Sigmoid colon (tissue), 7 donors: ENCODE measurements at regions of chr9 and their contacts with region 1.

Region 1: DNA sequence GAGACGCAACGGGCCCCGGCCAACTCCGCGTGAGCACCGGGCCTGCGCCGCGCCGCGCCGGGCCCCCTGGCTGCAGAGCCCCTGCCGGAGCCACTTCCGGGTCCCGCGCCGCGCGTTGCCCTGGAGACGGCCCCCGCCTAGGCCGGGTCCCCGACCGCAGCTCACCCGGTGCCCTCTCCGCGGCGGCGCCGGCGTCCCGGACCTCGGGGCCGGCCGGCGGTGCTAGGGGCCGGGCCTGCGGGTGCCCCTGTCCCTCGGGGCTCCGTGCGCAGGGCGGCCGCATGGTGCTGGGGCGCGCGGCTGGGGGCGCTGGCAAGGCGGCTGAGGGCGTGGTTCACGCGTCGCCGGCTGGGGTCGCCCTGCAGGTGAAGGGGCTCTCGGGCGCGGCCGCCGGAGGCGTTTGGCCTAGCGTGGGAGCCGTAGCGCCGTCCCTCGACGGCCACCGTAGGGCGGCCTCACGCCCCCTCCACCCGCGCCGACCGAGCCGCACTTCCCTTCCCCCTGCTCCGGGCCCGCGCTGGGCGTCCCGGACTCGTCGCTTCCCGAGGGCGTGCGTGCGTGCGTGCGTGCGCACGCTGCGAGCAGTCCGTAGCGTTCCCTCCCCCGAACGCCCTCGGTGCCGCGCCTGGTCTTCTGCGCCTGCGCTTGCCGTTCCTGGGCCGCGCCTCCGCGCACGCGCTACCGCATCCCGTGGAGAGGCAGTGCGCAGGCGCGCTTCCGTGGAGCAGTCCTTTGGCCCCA is at the start of gene TMEM250:
- DNase-seq: peak; percentile 98
- H3K4me3 ChIP-seq: peak within 1 kb of the TSS; percentile 54 to 98 (median 88)
- H3K27ac ChIP-seq: peak within 1 kb of the TSS; percentile 93 to 99 (median 98)
- H3K4me1 ChIP-seq: peaks cover 0 to 49% (median 36%) of the 10 kb centered on the region in 4 donors
- H3K27me3 ChIP-seq: no peaks in the 10 kb centered on the region
- CTCF ChIP-seq: peak in 1 of 4 experiments; percentile 12
- EP300 ChIP-seq: peak in 1 of 4 donors; percentile 56
- POLR2A ChIP-seq: no peak
- total RNA-seq, gene TMEM250: 23.7 to 35.6 (median 30.2) TPM

Region 2: DNA sequence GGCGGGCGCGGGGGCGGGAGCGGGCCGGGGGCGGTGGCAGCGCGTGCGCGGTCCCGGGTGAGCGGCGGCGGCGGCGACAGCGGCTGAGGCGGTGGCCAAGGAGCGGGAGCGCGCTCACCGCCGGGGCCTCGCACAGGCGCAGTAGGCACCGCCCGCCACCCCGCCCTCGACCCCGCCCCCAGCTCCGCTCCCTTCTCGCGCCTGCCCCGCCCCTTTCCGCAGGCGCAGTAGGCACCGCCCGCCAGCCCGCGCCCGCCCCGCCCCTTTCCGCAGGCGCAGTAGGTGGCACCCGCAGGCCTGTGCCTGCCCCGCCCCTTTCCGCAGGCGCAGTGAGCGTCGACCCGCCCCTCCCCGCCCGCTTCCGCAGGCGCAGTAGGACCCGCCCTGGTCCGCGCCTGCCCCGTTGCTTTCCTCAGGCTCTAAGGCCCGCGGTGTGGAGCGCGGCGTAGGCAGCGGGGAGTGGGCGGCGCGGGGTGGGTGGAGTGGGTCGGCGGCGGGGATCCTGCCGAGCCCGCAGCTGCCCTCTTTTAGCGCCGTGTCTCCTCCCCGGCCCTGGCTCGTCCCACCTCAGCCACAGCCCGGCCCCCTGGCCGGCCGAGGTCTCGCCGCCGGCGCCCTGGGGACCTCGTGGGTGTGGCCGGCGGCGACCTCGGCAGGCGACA is 210.9 kb before region 1 on chr9 and contains the start of gene CAMSAP1:
- intact Hi-C with region 1: loop called (anchors 2 kb)
- DNase-seq: peak; percentile 96
- H3K4me3 ChIP-seq: peak within 1 kb of the TSS; percentile 80 to 95 (median 88)
- H3K27ac ChIP-seq: peak within 1 kb of the TSS; percentile 77 to 88 (median 84)
- H3K4me1 ChIP-seq: peaks cover 0 to 51% (median 37%) of the 10 kb centered on the region in 4 donors
- H3K27me3 ChIP-seq: no peaks in the 10 kb centered on the region
- CTCF ChIP-seq: no peak
- EP300 ChIP-seq: no peak
- POLR2A ChIP-seq: peak in 1 of 2 donors; percentile 27
- total RNA-seq, gene CAMSAP1: 19.4 to 37.7 (median 21.2) TPM

Region 3: DNA sequence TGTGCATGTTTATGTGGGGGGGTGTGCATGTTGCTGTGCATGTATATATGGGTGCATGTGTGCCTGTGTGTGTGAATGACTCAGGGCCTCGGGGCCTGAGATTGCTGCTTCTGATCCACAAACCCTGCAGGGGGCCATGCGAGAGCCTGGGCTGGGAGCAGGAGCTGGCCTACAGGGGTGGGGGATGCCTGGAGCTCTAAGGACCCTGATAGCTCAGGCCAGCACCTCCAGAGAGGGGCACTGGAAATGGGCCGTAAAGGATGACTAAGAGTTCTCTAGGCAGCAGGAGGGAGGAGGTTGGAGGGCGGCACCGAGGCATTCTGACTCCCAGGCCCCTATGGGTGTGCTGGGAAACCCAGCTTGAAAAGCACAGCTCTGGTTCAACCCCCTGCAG is 150.4 kb before region 1 on chr9:
- intact Hi-C with region 1: loop called (anchors 1 kb)
- DNase-seq: no peak
- H3K4me3 ChIP-seq: no peak overlapping the region
- H3K27ac ChIP-seq: no peak overlapping the region
- H3K4me1 ChIP-seq: peaks cover 0 to 12% (median 8%) of the 10 kb centered on the region in 4 donors
- H3K27me3 ChIP-seq: no peaks in the 10 kb centered on the region
- CTCF ChIP-seq: no peak
- EP300 ChIP-seq: no peak
- POLR2A ChIP-seq: no peak

Region 4: DNA sequence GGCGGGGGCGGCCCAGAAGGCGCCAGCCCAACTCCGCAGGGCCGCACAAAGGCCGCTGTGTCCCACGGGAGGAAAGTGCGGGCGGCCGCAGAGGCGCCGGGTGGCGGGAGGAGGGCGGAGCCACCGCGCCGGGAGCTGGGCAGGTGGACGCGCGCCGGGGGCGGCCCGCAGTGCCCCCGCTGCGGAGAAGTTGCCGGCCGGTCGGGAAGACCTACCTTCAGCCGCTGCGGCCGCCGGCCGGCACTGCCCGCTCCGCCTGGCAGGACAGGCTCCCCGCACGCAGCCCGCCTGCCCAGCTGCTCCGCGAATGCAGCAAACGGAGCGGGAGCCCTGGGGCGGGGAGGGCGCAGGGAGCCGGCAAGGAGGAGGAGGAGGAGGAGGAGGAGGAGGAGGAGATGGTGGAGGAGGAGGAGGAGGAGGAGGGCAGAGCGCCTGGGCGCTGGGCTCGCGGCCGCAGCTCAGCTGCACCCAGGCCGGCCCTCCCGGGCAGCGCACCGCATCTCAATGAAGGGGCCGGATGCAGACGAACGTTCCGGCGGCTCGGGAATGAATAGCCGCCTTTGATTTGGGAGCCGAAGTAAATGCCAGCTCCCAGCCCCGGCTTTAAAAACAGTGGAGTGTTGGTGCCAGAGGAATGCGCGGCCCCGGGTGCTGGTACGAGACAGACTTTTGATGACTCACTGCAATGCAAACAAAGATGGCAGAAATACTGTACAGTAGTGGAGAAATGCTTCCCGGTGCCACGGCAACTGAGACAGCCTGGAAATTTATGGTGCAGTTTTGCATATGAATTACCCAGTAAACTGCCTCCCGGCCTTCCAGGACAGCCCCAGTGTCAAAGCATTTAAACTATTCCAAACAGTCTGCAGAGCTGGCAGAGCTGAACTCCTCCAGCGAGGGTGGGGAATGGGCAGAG is 66.7 kb before region 1 on chr9:
- intact Hi-C with region 1: loop called (anchors 2 kb)
- DNase-seq: peak; percentile 89
- H3K4me3 ChIP-seq: peak overlapping the region; percentile 35 to 57 (median 54)
- H3K27ac ChIP-seq: peak overlapping the region; percentile 83 to 90 (median 88)
- H3K4me1 ChIP-seq: peaks cover 0 to 98% (median 93%) of the 10 kb centered on the region in 4 donors
- H3K27me3 ChIP-seq: no peaks in the 10 kb centered on the region
- CTCF ChIP-seq: no peak
- EP300 ChIP-seq: peak in 2 of 4 donors; percentile 6 to 43
- POLR2A ChIP-seq: no peak

Region 5: DNA sequence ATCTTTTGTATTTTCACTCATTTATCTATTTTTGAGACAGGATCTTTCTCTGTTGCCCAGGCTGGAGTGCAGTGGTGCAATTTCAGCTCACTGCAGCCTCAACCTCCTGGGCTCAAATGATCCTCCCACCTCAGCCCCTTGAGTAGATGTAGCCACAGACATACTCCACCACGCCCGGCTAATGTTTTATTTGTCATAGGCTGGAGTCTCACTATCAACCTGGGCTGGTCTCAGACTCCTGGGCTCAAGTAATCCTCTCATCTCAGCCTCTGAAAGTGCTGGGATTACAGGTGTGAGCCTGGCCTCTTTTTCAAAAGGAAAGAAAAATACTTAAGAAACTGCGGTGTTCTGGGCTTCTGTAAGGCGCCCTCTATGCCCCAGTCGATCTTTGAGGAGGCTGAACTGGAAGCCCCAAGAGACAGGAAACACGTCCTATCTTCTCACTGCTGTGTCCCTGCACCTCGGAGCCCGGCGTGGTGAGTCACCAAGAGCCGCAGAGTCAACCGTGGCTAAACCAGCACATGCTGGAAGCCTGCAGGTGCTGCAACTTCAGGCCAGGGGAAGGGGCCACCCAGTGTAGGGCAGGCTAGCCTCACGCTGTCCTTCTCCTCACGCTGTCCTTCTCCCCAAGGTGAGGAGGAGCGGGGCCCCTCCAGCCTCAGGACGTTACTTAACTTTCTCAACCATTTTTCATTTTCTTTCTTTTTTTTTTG is 101.7 kb after region 1 on chr9:
- intact Hi-C with region 1: no loop called
- DNase-seq: no peak
- H3K4me3 ChIP-seq: no peak overlapping the region
- H3K27ac ChIP-seq: no peak overlapping the region
- H3K4me1 ChIP-seq: no peaks in the 10 kb centered on the region
- H3K27me3 ChIP-seq: no peaks in the 10 kb centered on the region
- CTCF ChIP-seq: no peak
- EP300 ChIP-seq: no peak
- POLR2A ChIP-seq: no peak